Naive thymus-derived CD4-positive, alpha-beta T cell (primary cell): ENCODE measurements at regions of chr11 and their contacts with region 1.

Region 1: DNA sequence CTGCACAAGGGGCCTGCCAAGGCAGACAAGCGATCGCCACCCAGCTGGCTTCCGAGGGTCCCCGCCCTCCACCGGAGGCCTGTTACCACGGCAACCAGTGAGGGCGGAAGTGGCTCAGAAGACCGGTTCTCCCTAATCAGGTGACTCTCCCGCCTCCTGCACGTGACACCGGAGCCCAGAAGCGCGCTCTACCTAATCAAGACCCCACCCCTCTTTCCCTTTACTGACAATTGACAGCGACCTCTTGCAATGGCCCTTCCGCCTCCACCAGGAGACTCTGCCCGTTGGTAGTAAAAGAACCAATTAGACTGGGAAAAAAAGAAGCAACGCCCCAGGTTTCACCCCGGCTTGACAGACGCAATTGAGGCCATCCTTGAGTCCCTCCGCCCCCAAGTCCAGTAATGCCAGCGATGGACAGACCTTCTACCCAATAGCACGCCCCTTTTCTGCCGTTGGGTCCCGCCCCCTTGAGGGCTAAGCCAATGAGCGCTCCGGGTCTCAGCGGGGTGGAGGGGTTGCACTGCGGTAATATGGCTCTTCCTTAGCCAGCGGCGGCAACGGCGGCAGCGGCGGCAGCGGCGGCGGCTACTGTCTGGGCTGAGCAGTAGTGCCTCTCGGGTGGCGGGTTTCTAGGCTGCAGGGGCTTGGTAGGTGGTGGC is at the start of gene UVRAG:
- DNase-seq: peak; percentile 96 to 99 (median 98)
- ATAC-seq: peak; percentile 94
- H3K4me3 ChIP-seq: peak within 1 kb of the TSS; percentile 96
- H3K4me3 Mint-ChIP-seq: peak within 1 kb of the TSS in 3 of 10 donors; percentile 93 to 99 (median 98)
- H3K27ac ChIP-seq: peak within 1 kb of the TSS; percentile 83
- H3K27ac Mint-ChIP-seq: peak within 1 kb of the TSS in 7 of 9 donors; percentile 88 to 100 (median 96)
- H3K4me1 ChIP-seq: peaks cover 14 to 26% of the 10 kb centered on the region in 2 donors
- H3K4me1 Mint-ChIP-seq: peaks cover 5 to 21% (median 20%) of the 10 kb centered on the region in 7 donors
- H3K27me3 ChIP-seq: no peaks in the 10 kb centered on the region
- H3K27me3 Mint-ChIP-seq: peaks cover 0 to 4% (median 0%) of the 10 kb centered on the region in 5 donors
- total RNA-seq, gene UVRAG: 24.0 to 46.1 (median 25.4) TPM

Region 2: GRCh38 chr11:74948898-74949747 is 865.7 kb before region 1 on chr11 and contains the starts of genes SPCS2 and XRRA1:
- CTCF ChIA-PET with region 1: no interaction called
- POLR2A ChIA-PET with region 1: no interaction called
- intact Hi-C with region 1: loop called in 1 of 2 experiments (anchors 10 kb)
- DNase-seq: peak; percentile 87 to 98 (median 97)
- ATAC-seq: peak; percentile 99
- H3K4me3 ChIP-seq: peak within 1 kb of the TSS; percentile 99
- H3K4me3 Mint-ChIP-seq: peak within 1 kb of the TSS; percentile 95 to 99 (median 96)
- H3K27ac ChIP-seq: peak within 1 kb of the TSS; percentile 78
- H3K27ac Mint-ChIP-seq: peak within 1 kb of the TSS; percentile 85 to 99 (median 96)
- H3K4me1 ChIP-seq: peaks cover 16 to 21% of the 10 kb centered on the region in 2 donors
- H3K4me1 Mint-ChIP-seq: peaks cover 30 to 86% (median 55%) of the 10 kb centered on the region in 7 donors
- H3K27me3 ChIP-seq: no peaks in the 10 kb centered on the region
- H3K27me3 Mint-ChIP-seq: no peaks in the 10 kb centered on the region
- total RNA-seq, gene SPCS2: 53.9 to 211 (median 87.5) TPM
- total RNA-seq, gene XRRA1: 11.3 to 20.8 (median 20.3) TPM

Region 3: DNA sequence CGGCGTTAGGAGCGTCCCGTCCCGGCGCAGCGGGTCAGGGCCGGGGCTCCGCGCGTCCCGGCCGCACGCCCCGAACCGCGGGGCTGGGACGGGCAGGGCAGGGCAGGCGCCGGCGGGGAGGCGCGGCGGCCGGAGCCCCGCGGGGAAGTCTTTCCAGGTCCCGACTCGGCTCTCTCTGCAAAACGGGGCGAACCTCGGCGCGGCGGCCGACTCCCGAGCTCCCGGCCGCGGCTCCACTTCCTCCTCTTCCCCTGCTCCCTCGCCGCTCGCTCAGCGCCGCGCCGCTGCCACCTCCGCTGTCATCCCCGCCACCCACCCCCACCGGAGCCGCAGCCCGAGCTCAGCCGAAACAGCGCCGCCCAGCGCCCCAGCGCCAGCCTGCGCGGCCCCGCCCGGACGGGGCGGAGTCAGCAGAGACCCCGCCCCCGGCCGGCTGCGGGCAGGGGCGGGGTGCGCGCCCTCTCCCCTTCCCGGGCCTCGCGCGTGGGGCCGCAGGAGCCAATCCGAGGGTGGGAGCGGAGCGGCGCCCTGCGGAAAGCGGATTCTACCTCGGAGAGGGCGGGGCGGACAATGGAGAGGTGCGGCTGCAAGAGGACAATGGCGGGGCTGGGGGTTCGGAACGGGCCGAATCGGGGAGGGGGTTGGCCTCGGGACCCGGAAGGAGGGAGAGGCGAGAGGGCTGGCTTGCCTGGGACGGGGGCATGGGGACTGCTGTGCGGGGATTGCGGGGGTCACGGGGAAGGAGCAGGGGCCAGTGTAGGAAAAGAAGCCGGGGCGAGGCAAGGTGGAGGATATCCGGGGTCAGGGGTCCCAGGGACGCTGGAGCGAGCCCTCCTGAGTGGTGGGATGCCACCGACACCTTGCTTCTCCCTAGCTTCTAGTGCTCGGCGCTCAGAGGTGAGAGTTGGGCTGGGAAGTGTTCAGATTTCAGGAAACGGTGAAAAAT is 288.9 kb before region 1 on chr11 and contains the start of gene GDPD5:
- CTCF ChIA-PET with region 1: no interaction called
- POLR2A ChIA-PET with region 1: no interaction called
- intact Hi-C with region 1: loop called in 1 of 2 experiments (anchors 1 kb)
- DNase-seq: peak; percentile 86 to 97 (median 91)
- ATAC-seq: peak; percentile 99
- H3K4me3 ChIP-seq: peak within 1 kb of the TSS; percentile 61
- H3K4me3 Mint-ChIP-seq: peak within 1 kb of the TSS; percentile 71 to 90 (median 84)
- H3K27ac ChIP-seq: peak within 1 kb of the TSS; percentile 71
- H3K27ac Mint-ChIP-seq: peak within 1 kb of the TSS; percentile 41 to 89 (median 74)
- H3K4me1 ChIP-seq: peaks cover 0 to 16% of the 10 kb centered on the region in 2 donors
- H3K4me1 Mint-ChIP-seq: peaks cover 10 to 37% (median 29%) of the 10 kb centered on the region in 7 donors
- H3K27me3 ChIP-seq: no peaks in the 10 kb centered on the region
- H3K27me3 Mint-ChIP-seq: peaks cover 0 to 24% (median 0%) of the 10 kb centered on the region in 5 donors
- total RNA-seq, gene GDPD5: 18.0 to 50.3 (median 24.7) TPM

Region 4: GRCh38 chr11:75802913-75803820 is 11.6 kb before region 1 on chr11:
- CTCF ChIA-PET with region 1: interaction called, 15 read pairs
- POLR2A ChIA-PET with region 1: no interaction called
- intact Hi-C with region 1: loop called in 1 of 2 experiments (anchors 1 kb)
- DNase-seq: peak; percentile 39 to 67 (median 54)
- ATAC-seq: peak; percentile 91
- H3K4me3 ChIP-seq: no peak overlapping the region
- H3K4me3 Mint-ChIP-seq: no peak overlapping the region
- H3K27ac ChIP-seq: no peak overlapping the region
- H3K27ac Mint-ChIP-seq: no peak overlapping the region
- H3K4me1 ChIP-seq: peaks cover 0 to 14% of the 10 kb centered on the region in 2 donors
- H3K4me1 Mint-ChIP-seq: peaks cover 0 to 22% (median 11%) of the 10 kb centered on the region in 7 donors
- H3K27me3 ChIP-seq: no peaks in the 10 kb centered on the region
- H3K27me3 Mint-ChIP-seq: no peaks in the 10 kb centered on the region

Region 5: GRCh38 chr11:76235233-76236091 is 420.6 kb after region 1 on chr11:
- CTCF ChIA-PET with region 1: no interaction called
- POLR2A ChIA-PET with region 1: no interaction called
- intact Hi-C with region 1: loop called (anchors 1 kb)
- DNase-seq: peak; percentile 79 to 95 (median 92)
- ATAC-seq: peak; percentile 87
- H3K4me3 ChIP-seq: peak overlapping the region; percentile 98
- H3K4me3 Mint-ChIP-seq: peak overlapping the region; percentile 82 to 94 (median 91)
- H3K27ac ChIP-seq: peak overlapping the region; percentile 57
- H3K27ac Mint-ChIP-seq: peak overlapping the region; percentile 89 to 99 (median 96)
- H3K4me1 ChIP-seq: peaks cover 26 to 40% of the 10 kb centered on the region in 2 donors
- H3K4me1 Mint-ChIP-seq: peaks cover 16 to 65% (median 55%) of the 10 kb centered on the region in 7 donors
- H3K27me3 ChIP-seq: no peaks in the 10 kb centered on the region
- H3K27me3 Mint-ChIP-seq: peaks cover 0 to 30% (median 0%) of the 10 kb centered on the region in 5 donors

Region 6: DNA sequence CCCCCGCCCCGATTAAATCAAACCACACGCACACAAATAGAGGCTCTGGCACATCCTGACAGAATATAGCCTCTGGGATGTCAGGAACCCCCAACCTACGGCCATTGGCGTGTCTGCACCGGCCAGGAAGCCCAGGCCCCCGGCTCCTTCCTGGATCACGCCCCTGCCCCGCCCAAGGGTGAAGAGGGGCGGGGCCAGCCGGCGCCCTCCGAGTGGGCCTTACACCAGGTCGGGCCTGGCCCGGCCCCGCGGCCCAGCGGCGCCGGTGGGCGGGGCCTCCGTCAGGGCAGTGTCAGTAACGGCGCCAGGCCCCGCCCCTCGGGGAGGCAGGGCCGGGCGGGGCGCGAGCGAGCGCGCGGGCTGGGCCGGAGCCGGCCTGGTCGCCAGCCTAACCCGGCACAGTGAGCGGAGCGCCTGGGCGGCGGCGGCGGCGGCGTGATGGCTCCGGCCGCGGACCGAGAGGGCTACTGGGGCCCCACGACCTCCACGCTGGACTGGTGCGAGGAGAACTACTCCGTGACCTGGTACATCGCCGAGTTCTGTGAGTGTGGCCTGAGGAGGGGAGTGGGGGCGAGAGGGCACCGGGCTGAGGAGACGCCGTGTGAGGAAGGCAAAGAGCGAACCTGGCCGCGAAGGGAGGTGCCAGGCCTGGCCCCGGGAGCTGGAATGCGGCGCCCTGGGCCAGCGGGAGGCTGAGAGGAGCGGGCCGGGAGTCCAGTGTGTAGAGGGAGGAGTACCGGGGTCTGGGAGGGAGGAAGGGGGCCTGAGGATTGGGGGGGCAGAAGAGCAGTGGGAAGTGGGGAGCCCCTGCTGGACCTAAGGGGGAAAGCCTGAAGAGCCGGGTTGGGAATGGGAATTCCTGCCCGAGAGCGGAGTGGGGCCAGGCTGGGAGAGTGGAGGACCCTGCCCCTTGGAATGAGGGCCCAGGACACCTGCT is 1046.0 kb after region 1 on chr11 and contains the start of gene ACER3:
- CTCF ChIA-PET with region 1: no interaction called
- POLR2A ChIA-PET with region 1: no interaction called
- intact Hi-C with region 1: loop called in 1 of 2 experiments (anchors 5 kb)
- DNase-seq: peak; percentile 36 to 95 (median 61)
- ATAC-seq: peak; percentile 98
- H3K4me3 ChIP-seq: peak within 1 kb of the TSS; percentile 57
- H3K4me3 Mint-ChIP-seq: peak within 1 kb of the TSS; percentile 80 to 92 (median 88)
- H3K27ac ChIP-seq: peak within 1 kb of the TSS; percentile 72
- H3K27ac Mint-ChIP-seq: peak within 1 kb of the TSS; percentile 73 to 95 (median 85)
- H3K4me1 ChIP-seq: peaks cover 9 to 11% of the 10 kb centered on the region in 2 donors
- H3K4me1 Mint-ChIP-seq: peaks cover 19 to 36% (median 28%) of the 10 kb centered on the region in 7 donors
- H3K27me3 ChIP-seq: no peaks in the 10 kb centered on the region
- H3K27me3 Mint-ChIP-seq: no peaks in the 10 kb centered on the region
- total RNA-seq, gene ACER3: 4.7 to 15.2 (median 9.0) TPM